ENCODE measurements at regions of chr5 and their contacts with region 1.

Region 1: GRCh38 chr5:144191998-144192397 is 21.3 kb downstream of the KCTD16 start:
- DNase-seq: peak; percentile 48
- H3K4me3 Mint-ChIP-seq: no peak overlapping the region
- H3K27ac Mint-ChIP-seq: no peak overlapping the region
- H3K4me1 Mint-ChIP-seq: peaks cover 21% of the 10 kb centered on the region
- H3K27me3 Mint-ChIP-seq: peaks cover 8% of the 10 kb centered on the region

Region 2: DNA sequence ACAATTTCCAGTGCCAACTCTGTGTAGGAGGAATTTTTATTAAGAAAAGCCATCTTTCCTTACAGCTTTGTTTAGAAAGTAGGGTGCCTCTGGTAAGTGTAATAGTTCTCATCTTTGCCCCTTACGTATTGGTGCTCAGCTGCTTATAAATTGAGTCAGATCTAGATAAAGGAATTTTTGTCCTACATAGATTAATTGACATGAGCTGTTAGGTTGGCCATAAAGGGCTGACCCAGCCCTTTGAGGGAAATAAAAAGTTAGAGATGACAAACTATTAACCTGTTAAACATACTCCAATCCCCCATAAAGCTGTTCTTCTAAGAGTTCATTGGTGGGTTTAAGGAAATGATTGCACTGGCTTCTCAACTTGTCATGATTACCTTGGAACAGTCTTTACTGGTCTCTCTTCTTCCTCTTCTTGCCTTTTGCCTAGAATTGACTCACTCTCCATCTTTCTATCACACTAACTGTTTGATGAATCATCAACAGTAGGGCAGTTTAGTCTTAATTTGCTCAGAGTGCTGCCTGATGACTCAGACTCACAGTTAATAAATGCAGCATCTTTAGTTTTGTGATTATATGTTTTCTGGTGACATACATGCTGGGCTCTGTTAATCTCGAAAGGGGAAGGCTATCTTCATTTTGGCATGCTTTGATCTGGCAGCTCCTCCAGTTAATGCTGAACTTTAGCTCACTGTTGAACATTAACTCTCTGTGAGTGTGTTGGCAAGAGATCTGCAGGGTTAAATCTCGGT is 1370.1 kb before region 1 on chr5:
- intact Hi-C with region 1: loop called (anchors 5 kb)
- DNase-seq: no peak
- H3K4me3 Mint-ChIP-seq: no peak overlapping the region
- H3K27ac Mint-ChIP-seq: peak overlapping the region; percentile 16
- H3K4me1 Mint-ChIP-seq: peaks cover 79% of the 10 kb centered on the region
- H3K27me3 Mint-ChIP-seq: no peaks in the 10 kb centered on the region

Region 3: DNA sequence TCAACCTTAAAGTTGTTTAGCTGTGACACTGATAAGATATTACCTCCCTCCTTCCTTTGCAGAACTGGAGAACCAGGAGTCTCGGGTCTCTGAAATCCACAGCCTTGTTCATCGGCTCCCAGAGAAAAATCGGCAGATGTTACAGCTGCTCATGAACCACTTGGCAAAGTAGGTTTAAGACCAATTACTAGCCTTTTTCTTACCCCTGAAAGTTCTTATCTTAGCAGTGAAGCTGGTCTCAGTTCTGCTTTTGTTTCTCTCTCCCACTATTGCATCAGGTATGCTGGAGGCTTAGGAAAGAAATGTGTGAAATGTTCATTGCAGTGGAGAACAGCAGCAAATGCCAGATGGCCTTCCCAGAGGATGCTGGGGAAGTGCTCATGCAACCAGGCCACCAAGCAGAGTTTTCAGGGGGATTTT is 1134.4 kb before region 1 on chr5:
- intact Hi-C with region 1: loop called (anchors 5 kb)
- DNase-seq: no peak
- H3K4me3 Mint-ChIP-seq: no peak overlapping the region
- H3K27ac Mint-ChIP-seq: peak overlapping the region; percentile 97
- H3K4me1 Mint-ChIP-seq: peaks cover 77% of the 10 kb centered on the region
- H3K27me3 Mint-ChIP-seq: no peaks in the 10 kb centered on the region

Region 4: GRCh38 chr5:143350751-143351603 is 841.0 kb before region 1 on chr5:
- intact Hi-C with region 1: loop called (anchors 2 kb)
- DNase-seq: no peak
- H3K4me3 Mint-ChIP-seq: no peak overlapping the region
- H3K27ac Mint-ChIP-seq: no peak overlapping the region
- H3K4me1 Mint-ChIP-seq: peaks cover 21% of the 10 kb centered on the region
- H3K27me3 Mint-ChIP-seq: no peaks in the 10 kb centered on the region

Region 5: DNA sequence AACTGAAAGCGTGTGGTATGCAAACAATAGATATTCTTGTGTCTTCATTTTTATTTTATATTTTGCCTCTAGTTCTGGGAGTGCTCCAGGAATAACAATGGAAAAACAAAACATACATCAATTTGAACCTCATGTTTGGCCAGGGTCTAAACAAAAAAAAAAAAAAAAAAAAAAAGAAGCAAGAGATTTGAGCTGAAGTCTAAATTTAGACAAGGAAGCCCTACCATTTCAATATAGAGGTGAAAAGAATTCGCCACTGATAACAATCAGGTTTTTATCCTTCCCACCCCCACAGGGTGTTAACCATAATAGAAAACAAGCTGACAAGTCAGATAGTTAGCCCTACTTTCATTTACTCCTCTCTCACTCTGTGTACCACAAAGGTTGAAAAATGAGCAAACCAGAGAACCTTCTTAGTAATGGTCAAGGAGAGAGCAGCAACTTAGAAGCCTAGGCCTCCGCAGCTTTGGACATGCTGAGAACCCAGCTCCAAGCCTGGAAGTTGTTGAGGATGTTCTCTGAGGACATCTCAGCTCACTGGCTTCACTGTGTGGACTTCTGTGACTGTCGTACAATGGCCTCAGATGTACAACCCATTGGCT is 498.2 kb before region 1 on chr5:
- intact Hi-C with region 1: loop called (anchors 5 kb)
- DNase-seq: no peak
- H3K4me3 Mint-ChIP-seq: no peak overlapping the region
- H3K27ac Mint-ChIP-seq: peak overlapping the region; percentile 58
- H3K4me1 Mint-ChIP-seq: peaks cover 44% of the 10 kb centered on the region
- H3K27me3 Mint-ChIP-seq: no peaks in the 10 kb centered on the region

Region 6: GRCh38 chr5:144156767-144157171 is 35.2 kb before region 1 on chr5:
- intact Hi-C with region 1: no loop called
- DNase-seq: no peak
- H3K4me3 Mint-ChIP-seq: no peak overlapping the region
- H3K27ac Mint-ChIP-seq: no peak overlapping the region
- H3K4me1 Mint-ChIP-seq: no peaks in the 10 kb centered on the region
- H3K27me3 Mint-ChIP-seq: no peaks in the 10 kb centered on the region

Region 7: GRCh38 chr5:145743396-145744061 is 1551.5 kb after region 1 on chr5:
- intact Hi-C with region 1: loop called (anchors 5 kb)
- DNase-seq: no peak
- H3K4me3 Mint-ChIP-seq: no peak overlapping the region
- H3K27ac Mint-ChIP-seq: no peak overlapping the region
- H3K4me1 Mint-ChIP-seq: no peaks in the 10 kb centered on the region
- H3K27me3 Mint-ChIP-seq: no peaks in the 10 kb centered on the region

Measured in activated T-helper 1 cell treated with anti-CD3 and anti-CD28 coated beads, Interleukin-12 subunit alpha, Interleukin-12 subunit beta, Interleukin-2, Interleukin-4 antibody, amounts not matched to agents 30 ng/mL and 10 ng/mL and 1 ng/mL, durations not matched to agents 14 hours and 24 hours and 36 hours (primary cell).